Left cardiac atrium (tissue), 4 donors: ENCODE measurements at regions of chr6 and their contacts with region 1.

Region 1: GRCh38 chr6:13795041-13795750 is 19.2 kb downstream of the MCUR1 start:
- DNase-seq: peak; percentile 88
- ATAC-seq: peak; percentile 89 to 94

Region 2: DNA sequence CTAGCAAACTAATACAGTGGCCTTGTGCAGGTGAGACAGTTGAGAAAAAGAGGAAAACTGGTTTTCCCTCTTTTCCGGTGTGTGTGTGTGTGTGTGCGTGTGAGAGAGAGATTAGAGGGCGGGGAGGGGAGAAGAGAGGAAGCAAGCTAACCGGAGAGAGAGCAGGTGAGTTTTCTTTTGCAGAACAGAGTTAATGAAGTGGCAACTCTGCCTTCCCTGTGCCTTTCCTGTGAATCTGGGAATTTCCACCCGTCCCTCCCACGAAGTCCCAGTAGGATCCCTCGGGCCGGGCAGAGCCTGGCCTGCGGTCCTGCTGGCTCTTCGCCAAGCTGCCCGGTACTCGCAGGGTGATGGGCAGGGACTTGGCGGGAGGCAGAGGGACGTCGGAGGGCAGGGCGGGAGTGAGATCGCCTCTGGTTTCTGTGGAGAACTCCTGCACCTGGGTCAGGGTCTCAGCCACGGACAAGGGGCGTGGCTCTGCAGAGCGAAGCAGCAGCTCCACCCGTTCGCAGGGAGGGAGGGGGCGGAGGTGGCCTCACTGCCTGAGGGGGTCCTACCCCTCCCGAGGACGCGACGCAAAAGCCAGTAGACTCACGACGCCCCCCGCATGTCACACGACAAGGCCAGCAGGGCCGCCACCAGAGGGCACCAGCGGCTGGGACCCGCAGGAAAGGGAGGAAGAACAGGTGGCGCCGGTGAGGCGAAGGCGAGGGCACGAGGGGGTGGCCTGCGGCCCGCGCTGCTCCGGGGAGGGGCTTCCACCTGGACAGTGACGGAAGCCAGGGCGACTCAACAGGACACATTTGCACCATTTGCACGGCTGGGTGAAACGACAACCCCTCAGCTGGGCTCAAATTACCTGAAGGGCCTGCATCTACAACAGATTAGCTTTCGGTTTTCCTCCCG is 78.3 kb after region 1 on chr6:
- intact Hi-C with region 1: loop called in 1 of 2 experiments (anchors 10 kb)
- DNase-seq: peak; percentile 58
- ATAC-seq: peak; percentile 67 to 82

Region 3: DNA sequence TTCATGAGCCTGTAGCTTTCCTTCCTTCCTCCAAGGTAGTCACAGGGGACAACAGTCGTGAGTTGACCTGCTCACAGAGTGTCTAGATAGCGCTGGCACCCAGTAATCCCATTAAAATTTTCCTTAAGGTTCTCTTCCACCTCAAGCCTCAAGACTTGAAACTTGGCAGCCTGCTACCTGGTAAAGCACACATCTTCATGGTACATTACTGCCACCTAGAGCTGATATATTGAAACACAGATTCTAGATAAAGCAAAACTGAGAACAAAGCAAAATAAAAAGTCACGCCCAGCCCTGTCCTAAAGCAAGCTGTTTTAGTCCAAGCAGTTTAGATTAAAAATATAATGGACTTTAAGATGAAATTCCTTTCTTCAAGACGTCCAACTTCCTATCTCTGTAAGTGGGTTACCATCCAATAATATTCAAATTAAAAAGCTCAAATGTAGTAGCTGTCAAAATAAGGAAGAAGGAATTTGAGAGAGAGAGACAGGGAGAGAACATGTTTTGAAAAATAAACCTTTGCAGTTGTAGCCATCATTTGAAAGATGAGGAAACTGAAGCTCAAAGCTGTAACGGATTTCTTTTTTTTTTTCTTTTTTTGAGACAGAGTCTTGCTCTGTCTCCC is 271.7 kb after region 1 on chr6:
- intact Hi-C with region 1: loop called in 1 of 2 experiments (anchors 10 kb)
- DNase-seq: no peak
- ATAC-seq: peak; percentile 79 to 85